ENCODE measurements at regions of chr11 and their contacts with region 1.

Region 1: GRCh38 chr11:62705880-62706849 is 1.1 kb downstream of the BSCL2 start:
- DNase-seq: peak; percentile 96
- ATAC-seq: peak; percentile 61
- H3K4me3 Mint-ChIP-seq: peak overlapping the region; percentile 92
- H3K27ac Mint-ChIP-seq: peak overlapping the region; percentile 98
- H3K4me1 Mint-ChIP-seq: peaks cover 38% of the 10 kb centered on the region
- H3K27me3 Mint-ChIP-seq: no peaks in the 10 kb centered on the region; the same call in 1 of the 2 replicates
- CTCF ChIP-seq: no peak

Region 2: DNA sequence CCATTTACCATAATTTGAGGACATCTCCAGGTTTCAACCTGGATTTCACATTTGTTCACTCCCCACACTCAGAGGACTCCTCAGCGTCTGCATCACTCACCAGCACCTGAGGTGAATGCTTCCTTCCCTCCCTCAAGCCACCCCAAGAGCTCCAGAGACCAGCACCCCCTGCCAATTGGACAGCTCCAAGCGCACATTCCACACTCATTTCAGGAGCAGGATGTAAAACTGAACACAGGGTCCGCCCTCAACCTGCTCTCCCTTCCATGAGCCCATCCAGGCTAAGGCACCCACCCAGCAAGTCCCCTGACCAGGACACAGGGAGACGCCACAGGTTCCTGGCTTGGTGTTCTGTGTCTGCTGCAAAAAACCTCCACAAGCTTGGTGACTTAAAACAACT is 512.2 kb before region 1 on chr11:
- CTCF ChIA-PET with region 1: no interaction called
- POLR2A ChIA-PET with region 1: no interaction called
- DNase-seq: peak; percentile 51
- ATAC-seq: peak; percentile 68
- H3K4me3 Mint-ChIP-seq: no peak overlapping the region
- H3K27ac Mint-ChIP-seq: no peak overlapping the region
- H3K4me1 Mint-ChIP-seq: peaks cover 15% of the 10 kb centered on the region
- H3K27me3 Mint-ChIP-seq: no peaks in the 10 kb centered on the region
- CTCF ChIP-seq: no peak

Region 3: GRCh38 chr11:62621567-62622470 is 84.3 kb before region 1 on chr11 and contains the start of gene B3GAT3:
- CTCF ChIA-PET with region 1: interaction called, 5 read pairs
- POLR2A ChIA-PET with region 1: interaction called, 10 read pairs
- DNase-seq: peak; percentile 99
- ATAC-seq: peak; percentile 97
- H3K4me3 Mint-ChIP-seq: peak within 1 kb of the TSS; percentile 97
- H3K27ac Mint-ChIP-seq: peak within 1 kb of the TSS; percentile 93
- H3K4me1 Mint-ChIP-seq: peaks cover 16% of the 10 kb centered on the region
- H3K27me3 Mint-ChIP-seq: no peaks in the 10 kb centered on the region
- CTCF ChIP-seq: no peak
- total RNA-seq, gene B3GAT3: 41.2 to 43.9 TPM (median 43.3 TPM) in 3 replicates

Region 4: DNA sequence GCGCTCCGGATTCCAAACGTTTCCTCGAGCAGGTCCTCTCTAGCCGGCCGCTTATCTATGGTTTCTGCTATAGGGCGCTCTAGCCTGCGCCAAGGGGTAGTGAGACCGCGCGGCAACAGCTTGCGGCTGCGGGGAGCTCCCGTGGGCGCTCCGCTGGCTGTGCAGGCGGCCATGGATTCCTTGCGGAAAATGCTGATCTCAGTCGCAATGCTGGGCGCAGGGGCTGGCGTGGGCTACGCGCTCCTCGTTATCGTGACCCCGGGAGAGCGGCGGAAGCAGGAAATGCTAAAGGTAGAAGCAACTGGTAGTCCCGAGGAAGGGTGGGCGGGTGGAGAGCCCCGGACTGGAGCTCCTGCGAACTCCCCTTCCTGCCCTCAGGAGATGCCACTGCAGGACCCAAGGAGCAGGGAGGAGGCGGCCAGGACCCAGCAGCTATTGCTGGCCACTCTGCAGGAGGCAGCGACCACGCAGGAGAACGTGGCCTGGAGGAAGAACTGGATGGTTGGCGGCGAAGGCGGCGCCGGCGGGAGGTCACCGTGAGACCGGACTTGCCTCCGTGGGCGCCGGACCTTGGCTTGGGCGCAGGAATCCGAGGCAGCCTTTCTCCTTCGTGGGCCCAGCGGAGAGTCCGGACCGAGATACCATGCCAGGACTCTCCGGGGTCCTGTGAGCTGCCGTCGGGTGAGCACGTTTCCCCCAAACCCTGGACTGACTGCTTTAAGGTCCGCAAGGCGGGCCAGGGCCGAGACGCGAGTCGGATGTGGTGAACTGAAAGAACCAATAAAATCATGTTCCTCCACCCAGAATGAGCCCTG is 34.4 kb before region 1 on chr11 and contains the starts of genes LBHD1 and UQCC3:
- CTCF ChIA-PET with region 1: interaction called, 8 read pairs
- POLR2A ChIA-PET with region 1: interaction called, 35 read pairs
- DNase-seq: peak; percentile 87
- ATAC-seq: peak; percentile 69
- H3K4me3 Mint-ChIP-seq: peak within 1 kb of the TSS; percentile 98
- H3K27ac Mint-ChIP-seq: peak within 1 kb of the TSS; percentile 98
- H3K4me1 Mint-ChIP-seq: peaks cover 24% of the 10 kb centered on the region
- H3K27me3 Mint-ChIP-seq: no peaks in the 10 kb centered on the region
- CTCF ChIP-seq: no peak
- total RNA-seq, gene LBHD1: 4.2 to 6.3 TPM (median 5.1 TPM) in 3 replicates
- total RNA-seq, gene UQCC3: 17.7 to 18.7 TPM (median 18.1 TPM) in 3 replicates

Region 5: GRCh38 chr11:62694455-62695167 is 11.6 kb before region 1 on chr11:
- CTCF ChIA-PET with region 1: interaction called, 14 read pairs
- POLR2A ChIA-PET with region 1: interaction called, 9 read pairs
- DNase-seq: peak; percentile 86
- ATAC-seq: peak; percentile 84
- H3K4me3 Mint-ChIP-seq: no peak overlapping the region
- H3K27ac Mint-ChIP-seq: peak overlapping the region; percentile 73
- H3K4me1 Mint-ChIP-seq: peaks cover 2% of the 10 kb centered on the region; the same call in 1 of the 2 replicates
- H3K27me3 Mint-ChIP-seq: no peaks in the 10 kb centered on the region
- CTCF ChIP-seq: peak; percentile 84

Region 6: GRCh38 chr11:62726915-62727763 is 21.0 kb after region 1 on chr11 and contains the start of gene HNRNPUL2:
- CTCF ChIA-PET with region 1: interaction called, 8 read pairs
- POLR2A ChIA-PET with region 1: interaction called, 34 read pairs
- DNase-seq: peak; percentile 98
- ATAC-seq: peak; percentile 89
- H3K4me3 Mint-ChIP-seq: peak within 1 kb of the TSS; percentile 98
- H3K27ac Mint-ChIP-seq: peak within 1 kb of the TSS; percentile 100
- H3K4me1 Mint-ChIP-seq: peaks cover 25% of the 10 kb centered on the region
- H3K27me3 Mint-ChIP-seq: peaks cover 4% of the 10 kb centered on the region; the same call in 1 of the 2 replicates
- CTCF ChIP-seq: no peak
- total RNA-seq, gene HNRNPUL2: 42.1 to 42.9 TPM (median 42.2 TPM) in 3 replicates

Region 7: GRCh38 chr11:62753736-62754603 is 47.8 kb after region 1 on chr11 and contains the start of gene ZBTB3:
- CTCF ChIA-PET with region 1: interaction called, 7 read pairs
- POLR2A ChIA-PET with region 1: interaction called, 14 read pairs
- DNase-seq: peak; percentile 97
- ATAC-seq: peak; percentile 91
- H3K4me3 Mint-ChIP-seq: peak within 1 kb of the TSS; percentile 95
- H3K27ac Mint-ChIP-seq: peak within 1 kb of the TSS; percentile 99
- H3K4me1 Mint-ChIP-seq: peaks cover 28% of the 10 kb centered on the region
- H3K27me3 Mint-ChIP-seq: no peaks in the 10 kb centered on the region; the same call in 1 of the 2 replicates
- CTCF ChIP-seq: no peak
- total RNA-seq, gene ZBTB3: 82.3 to 88.1 TPM (median 88.0 TPM) in 3 replicates

Region 8: GRCh38 chr11:62771144-62772021 is 65.2 kb after region 1 on chr11 and contains the start of gene TAF6L:
- CTCF ChIA-PET with region 1: interaction called, 24 read pairs
- POLR2A ChIA-PET with region 1: interaction called, 5 read pairs
- DNase-seq: peak; percentile 96
- ATAC-seq: peak; percentile 82
- H3K4me3 Mint-ChIP-seq: peak within 1 kb of the TSS; percentile 88
- H3K27ac Mint-ChIP-seq: peak within 1 kb of the TSS; percentile 98
- H3K4me1 Mint-ChIP-seq: peaks cover 14% of the 10 kb centered on the region
- H3K27me3 Mint-ChIP-seq: no peaks in the 10 kb centered on the region; the same call in 1 of the 2 replicates
- CTCF ChIP-seq: no peak
- total RNA-seq, gene TAF6L: 33.8 to 42.1 TPM (median 36.3 TPM) in 3 replicates

Region 9: DNA sequence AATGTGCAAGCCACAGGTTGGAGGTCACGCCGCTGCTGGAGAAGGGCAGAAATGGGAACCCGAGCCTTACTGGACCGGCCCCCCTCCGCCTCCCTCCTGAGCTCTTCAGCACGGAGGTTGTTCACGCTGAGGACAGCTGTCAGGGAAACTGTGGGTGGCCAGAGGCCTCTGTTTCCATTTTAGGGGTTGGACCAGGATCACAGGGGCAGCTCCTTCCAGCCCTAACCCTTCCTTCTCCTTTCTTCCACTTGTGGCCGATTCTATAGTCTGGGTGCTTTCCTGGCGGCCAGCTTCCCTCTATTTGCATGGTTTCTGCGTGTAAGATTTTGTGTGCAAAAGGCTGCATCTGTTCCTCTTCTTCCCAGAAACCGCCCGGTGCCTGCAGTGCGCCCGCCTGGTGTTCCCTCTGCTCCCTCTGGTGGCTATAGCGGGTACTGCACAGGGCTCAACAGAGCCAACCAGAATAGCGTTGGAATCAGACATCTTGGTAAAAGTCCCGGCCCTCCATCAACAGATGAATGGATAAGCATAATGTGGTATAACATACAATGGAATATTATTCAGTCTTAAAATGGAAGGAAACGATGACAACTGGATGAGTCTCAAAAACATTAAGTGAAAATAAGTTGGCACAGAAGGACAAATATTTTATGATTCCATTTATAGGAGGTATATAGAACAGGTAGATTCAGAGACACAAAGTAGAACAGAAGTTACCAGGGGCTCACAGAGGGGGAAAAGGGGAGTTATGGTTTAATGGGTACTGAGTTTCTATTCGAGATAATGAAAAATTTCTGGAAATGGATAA is 317.9 kb after region 1 on chr11:
- CTCF ChIA-PET with region 1: no interaction called
- POLR2A ChIA-PET with region 1: no interaction called
- DNase-seq: peak; percentile 91
- ATAC-seq: peak; percentile 60
- H3K4me3 Mint-ChIP-seq: no peak overlapping the region
- H3K27ac Mint-ChIP-seq: no peak overlapping the region
- H3K4me1 Mint-ChIP-seq: peaks cover 16% of the 10 kb centered on the region
- H3K27me3 Mint-ChIP-seq: peaks cover 14% of the 10 kb centered on the region
- CTCF ChIP-seq: peak; percentile 100

Measured in WTC11 (cell line).